T-cell (primary cell): ENCODE measurements at regions of chr17 and their contacts with region 1.

Region 1: GRCh38 chr17:63859257-63859656 is 14.2 kb downstream of the CSH2 start:
- DNase-seq: no peak
- ATAC-seq: no peak
- H3K4me3 ChIP-seq: no peak overlapping the region
- H3K4me3 Mint-ChIP-seq: no peak overlapping the region
- H3K27ac ChIP-seq: no peak overlapping the region
- H3K27ac Mint-ChIP-seq: no peak overlapping the region
- H3K4me1 ChIP-seq: no peaks in the 10 kb centered on the region
- H3K4me1 Mint-ChIP-seq: no peaks in the 10 kb centered on the region
- H3K27me3 ChIP-seq: no peaks in the 10 kb centered on the region
- H3K27me3 Mint-ChIP-seq: peaks cover 0 to 3% of the 10 kb centered on the region in 2 donors

Region 2: GRCh38 chr17:63827002-63827771 is 32.1 kb before region 1 on chr17 and contains the starts of genes FTSJ3 and PSMC5:
- CTCF ChIA-PET with region 1: no interaction called
- POLR2A ChIA-PET with region 1: no interaction called
- DNase-seq: peak; percentile 85 to 99 (median 96)
- ATAC-seq: peak; percentile 93 to 96 (median 94)
- H3K4me3 ChIP-seq: peak within 1 kb of the TSS; percentile 80 to 100
- H3K4me3 Mint-ChIP-seq: peak within 1 kb of the TSS; percentile 96 to 98 (median 98)
- H3K27ac ChIP-seq: peak within 1 kb of the TSS; percentile 81
- H3K27ac Mint-ChIP-seq: peak within 1 kb of the TSS; percentile 99 to 100
- H3K4me1 ChIP-seq: peaks cover 33 to 58% of the 10 kb centered on the region in 2 experiments
- H3K4me1 Mint-ChIP-seq: peaks cover 72 to 90% (median 79%) of the 10 kb centered on the region in 3 donors
- H3K27me3 ChIP-seq: no peaks in the 10 kb centered on the region
- H3K27me3 Mint-ChIP-seq: no peaks in the 10 kb centered on the region
- total RNA-seq, gene FTSJ3: 39.4 to 64.9 (median 53.3) TPM
- total RNA-seq, gene PSMC5: 83.9 to 114 (median 107) TPM

Region 3: GRCh38 chr17:63937334-63937733 is 78.1 kb after region 1 on chr17:
- CTCF ChIA-PET with region 1: interaction called, 3 to 10 read pairs
- POLR2A ChIA-PET with region 1: no interaction called
- DNase-seq: no peak
- ATAC-seq: no peak
- H3K4me3 ChIP-seq: no peak overlapping the region
- H3K4me3 Mint-ChIP-seq: no peak overlapping the region
- H3K27ac ChIP-seq: no peak overlapping the region
- H3K27ac Mint-ChIP-seq: no peak overlapping the region
- H3K4me1 ChIP-seq: peaks cover 4 to 8% of the 10 kb centered on the region in 2 experiments
- H3K4me1 Mint-ChIP-seq: peaks cover 14 to 26% (median 19%) of the 10 kb centered on the region in 3 donors
- H3K27me3 ChIP-seq: peaks cover 0 to 7% of the 10 kb centered on the region in 2 experiments
- H3K27me3 Mint-ChIP-seq: no peaks in the 10 kb centered on the region